ENCODE measurements at regions of chr19 and their contacts with region 1.

Region 1: GRCh38 chr19:11987405-11988281 is 22.8 kb downstream of the ZNF763 start:
- DNase-seq: peak; percentile 98 to 99
- ATAC-seq: peak; percentile 99

Region 2: DNA sequence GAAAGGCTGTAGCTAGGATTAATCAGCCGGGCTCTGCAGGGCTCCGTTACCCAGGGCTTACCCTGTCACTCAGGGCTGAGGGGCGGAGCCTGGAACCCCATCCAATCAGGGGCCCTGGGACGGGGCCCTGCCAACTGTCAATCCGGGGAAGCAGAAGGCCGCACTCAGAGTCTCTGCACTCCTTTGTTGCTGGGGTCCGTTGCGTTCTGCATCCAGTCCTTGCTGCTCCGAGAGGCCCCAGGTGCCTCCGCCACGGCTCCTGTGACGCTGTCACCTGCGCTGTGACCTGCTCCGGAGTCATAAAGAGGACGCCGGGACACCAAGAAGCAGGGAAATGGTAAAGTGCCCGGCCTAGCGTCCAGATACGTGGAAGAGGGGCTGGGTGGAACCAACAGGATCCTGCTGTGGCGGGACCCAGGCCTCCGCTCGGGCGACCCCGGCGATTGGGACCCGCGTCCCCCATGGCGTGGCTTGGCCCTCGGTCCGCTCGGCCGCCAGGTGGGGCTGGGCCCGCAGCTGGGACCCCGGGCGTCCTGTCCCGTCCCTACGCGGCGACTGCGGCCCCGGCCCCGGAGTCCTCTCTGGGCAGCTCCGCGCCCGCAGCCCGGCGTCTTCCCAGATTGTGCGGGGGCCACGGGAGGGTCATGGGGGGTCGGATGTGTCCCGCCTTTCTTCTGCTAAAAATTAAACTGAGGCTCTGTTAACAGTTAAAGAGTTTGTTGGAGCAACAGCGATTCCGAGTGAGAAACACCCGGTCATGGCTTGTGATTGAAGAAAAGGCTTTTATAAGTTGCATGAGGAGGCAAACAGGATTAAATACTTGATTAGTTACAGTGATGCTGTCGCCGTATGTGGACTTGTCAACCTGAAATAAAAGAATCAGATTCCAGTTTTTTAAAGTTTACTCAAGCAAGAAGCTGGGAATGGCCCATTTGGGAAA is 189.0 kb before region 1 on chr19 and contains the start of gene ZNF491:
- intact Hi-C with region 1: loop called in 1 of 2 experiments (anchors 5 kb)
- DNase-seq: peak; percentile 95 to 96
- ATAC-seq: peak; percentile 95
- total RNA-seq, gene ZNF491: 2.7 to 3.5 TPM

Region 3: GRCh38 chr19:11924886-11925650 is 62.6 kb before region 1 on chr19 and contains the start of gene ZNF700:
- intact Hi-C with region 1: loop called (anchors 5 to 10 kb)
- DNase-seq: peak; percentile 97 to 99
- ATAC-seq: peak; percentile 93
- total RNA-seq, gene ZNF700: 16.4 to 20.0 TPM